Esophagus muscularis mucosa (tissue), 4 donors: ENCODE measurements at regions of chr17 and their contacts with region 1.

Region 1: GRCh38 chr17:15273141-15273793 is 8.1 kb upstream of the PMP22 start:
- DNase-seq: no peak
- H3K4me3 ChIP-seq: no peak overlapping the region
- H3K27ac ChIP-seq: peak overlapping the region; percentile 56 to 74 (median 61)
- H3K4me1 ChIP-seq: peaks cover 4 to 49% (median 29%) of the 10 kb centered on the region in 4 donors
- H3K27me3 ChIP-seq: no peaks in the 10 kb centered on the region
- CTCF ChIP-seq: no peak
- EP300 ChIP-seq: no peak
- POLR2A ChIP-seq: no peak

Region 2: GRCh38 chr17:15171167-15172047 is 101.9 kb before region 1 on chr17:
- intact Hi-C with region 1: no loop called
- DNase-seq: peak; percentile 89
- H3K4me3 ChIP-seq: no peak overlapping the region
- H3K27ac ChIP-seq: no peak overlapping the region
- H3K4me1 ChIP-seq: peaks cover 0 to 4% (median 0%) of the 10 kb centered on the region in 4 donors
- H3K27me3 ChIP-seq: peaks cover 0 to 38% (median 0%) of the 10 kb centered on the region in 4 donors
- CTCF ChIP-seq: peak; percentile 44 to 74 (median 47)
- EP300 ChIP-seq: no peak
- POLR2A ChIP-seq: no peak

Region 3: DNA sequence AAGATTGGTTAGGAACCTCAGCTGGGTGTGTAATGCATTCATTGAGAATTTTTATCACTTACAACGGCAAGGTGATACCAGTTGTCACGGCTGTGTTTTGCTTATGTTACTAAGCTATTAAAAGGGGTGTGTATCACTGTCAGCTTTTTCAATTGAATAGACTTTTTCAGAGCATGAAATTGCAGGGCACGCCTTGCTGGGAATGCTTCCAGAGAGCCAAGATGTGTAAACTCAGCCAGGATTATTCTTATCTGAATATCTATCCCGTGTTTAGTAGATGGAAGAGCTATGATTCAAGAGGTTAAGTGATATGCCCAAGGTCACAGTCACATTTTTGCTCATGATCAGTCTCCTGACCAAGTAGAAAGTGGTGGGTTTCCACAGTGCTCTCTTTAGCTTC is 74.8 kb after region 1 on chr17:
- intact Hi-C with region 1: loop called (anchors 5 kb)
- DNase-seq: no peak
- H3K4me3 ChIP-seq: no peak overlapping the region
- H3K27ac ChIP-seq: no peak overlapping the region
- H3K4me1 ChIP-seq: peaks cover 5 to 33% (median 22%) of the 10 kb centered on the region in 4 donors
- H3K27me3 ChIP-seq: peaks cover 0 to 20% (median 0%) of the 10 kb centered on the region in 4 donors
- CTCF ChIP-seq: no peak
- EP300 ChIP-seq: no peak
- POLR2A ChIP-seq: no peak

Region 4: DNA sequence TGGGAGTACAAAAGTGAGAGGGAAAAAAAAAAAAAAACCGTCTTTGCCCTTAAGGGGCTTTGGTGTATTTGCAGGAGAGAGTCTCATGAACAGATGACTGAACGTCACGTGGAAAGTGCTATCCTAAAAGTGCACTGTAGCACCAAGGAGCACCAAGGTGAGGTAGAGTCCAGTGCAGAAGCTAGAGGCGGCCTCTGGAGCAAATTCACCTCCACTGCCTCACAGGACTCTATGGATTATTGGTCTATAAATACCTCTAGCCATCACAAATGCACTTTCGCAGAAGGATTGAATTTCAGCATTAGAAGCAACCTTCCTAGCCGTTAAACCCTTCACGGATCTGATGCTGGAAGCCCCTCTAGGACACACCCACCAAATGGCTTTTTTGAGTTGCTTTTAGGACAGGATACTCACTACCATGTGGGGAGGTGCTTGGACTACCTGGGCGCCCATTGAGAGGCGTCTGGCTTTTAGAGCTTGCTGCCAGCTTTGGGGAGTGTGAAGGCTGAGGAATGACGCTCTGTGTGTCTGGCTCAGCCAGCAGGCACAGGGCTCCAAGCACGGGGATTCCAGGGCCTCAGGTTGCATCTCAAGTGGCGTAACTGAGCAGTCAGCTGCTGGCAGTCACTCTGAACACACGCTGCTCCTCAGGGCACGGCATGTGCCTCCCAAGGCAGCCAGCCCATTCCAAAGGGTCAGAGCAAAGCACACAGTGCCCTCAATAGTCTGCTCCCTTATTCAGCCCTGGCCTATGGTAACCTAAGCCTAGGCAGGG is 141.5 kb after region 1 on chr17:
- intact Hi-C with region 1: no loop called
- DNase-seq: no peak
- H3K4me3 ChIP-seq: no peak overlapping the region
- H3K27ac ChIP-seq: no peak overlapping the region
- H3K4me1 ChIP-seq: peaks cover 13 to 37% (median 26%) of the 10 kb centered on the region in 4 donors
- H3K27me3 ChIP-seq: no peaks in the 10 kb centered on the region
- CTCF ChIP-seq: no peak
- EP300 ChIP-seq: peak; percentile 13
- POLR2A ChIP-seq: no peak